ENCODE measurements at regions of chr10 and their contacts with region 1.

Region 1: DNA sequence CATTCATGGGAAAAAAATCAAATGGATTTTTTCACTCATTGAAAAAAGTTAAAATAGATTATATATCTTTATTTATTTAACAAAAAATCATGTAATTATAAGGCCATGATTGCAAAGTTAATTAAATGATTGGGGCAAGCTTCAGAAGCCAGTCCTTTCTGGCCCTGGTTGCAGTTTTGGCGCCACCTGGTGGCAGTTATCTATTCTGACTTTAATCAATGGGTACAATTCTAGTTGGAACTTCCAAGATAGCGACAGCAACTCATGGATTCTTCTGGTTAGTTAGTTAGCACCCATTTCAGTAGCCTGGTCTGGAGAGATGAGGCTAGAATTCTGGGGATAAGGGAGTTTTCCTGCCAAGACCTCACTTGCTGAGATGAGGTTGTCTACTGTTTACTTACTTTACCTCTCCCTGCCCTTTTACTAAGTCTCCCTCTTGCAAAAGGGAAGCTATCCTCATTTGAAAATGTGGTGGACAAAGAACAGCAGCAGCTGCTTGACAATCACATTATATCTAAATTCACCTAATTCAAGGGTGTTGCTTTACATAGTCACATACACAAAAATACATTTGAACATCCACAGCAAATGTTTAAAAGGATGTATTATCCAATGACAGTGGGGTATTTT is 42.3 kb downstream of the NOC3L start:
- DNase-seq: peak; percentile 33 to 61
- ATAC-seq: peak; percentile 63 to 77; a peak in 5 of 6 replicates
- H3K4me3 ChIP-seq: no peak overlapping the region
- H3K27ac ChIP-seq: no peak overlapping the region
- H3K4me1 ChIP-seq: no peaks in the 10 kb centered on the region
- CTCF ChIP-seq: peak; percentile 96
- EP300 ChIP-seq: no peak
- POLR2A ChIP-seq: no peak
- RAD21 ChIP-seq: peak; percentile 81 to 82

Region 2: GRCh38 chr10:94066411-94066810 is 254.0 kb before region 1 on chr10:
- CTCF ChIA-PET with region 1: interaction called, 10 read pairs
- POLR2A ChIA-PET with region 1: no interaction called
- DNase-seq: peak in 1 of 2 experiments; percentile 25
- ATAC-seq: peak; percentile 41 to 43; a peak in 2 of 6 replicates
- H3K4me3 ChIP-seq: no peak overlapping the region
- H3K27ac ChIP-seq: peak overlapping the region; percentile 56 to 78; a peak in 3 of 6 replicates
- H3K4me1 ChIP-seq: peaks cover 53% of the 10 kb centered on the region
- CTCF ChIP-seq: no peak
- EP300 ChIP-seq: no peak
- POLR2A ChIP-seq: no peak
- RAD21 ChIP-seq: no peak

Region 3: GRCh38 chr10:94287336-94287735 is 33.1 kb before region 1 on chr10:
- CTCF ChIA-PET with region 1: interaction called, 20 read pairs
- POLR2A ChIA-PET with region 1: no interaction called
- DNase-seq: no peak
- ATAC-seq: no peak
- H3K4me3 ChIP-seq: no peak overlapping the region
- H3K27ac ChIP-seq: no peak overlapping the region
- H3K4me1 ChIP-seq: no peaks in the 10 kb centered on the region
- CTCF ChIP-seq: no peak
- EP300 ChIP-seq: no peak
- POLR2A ChIP-seq: no peak
- RAD21 ChIP-seq: no peak

Region 4: DNA sequence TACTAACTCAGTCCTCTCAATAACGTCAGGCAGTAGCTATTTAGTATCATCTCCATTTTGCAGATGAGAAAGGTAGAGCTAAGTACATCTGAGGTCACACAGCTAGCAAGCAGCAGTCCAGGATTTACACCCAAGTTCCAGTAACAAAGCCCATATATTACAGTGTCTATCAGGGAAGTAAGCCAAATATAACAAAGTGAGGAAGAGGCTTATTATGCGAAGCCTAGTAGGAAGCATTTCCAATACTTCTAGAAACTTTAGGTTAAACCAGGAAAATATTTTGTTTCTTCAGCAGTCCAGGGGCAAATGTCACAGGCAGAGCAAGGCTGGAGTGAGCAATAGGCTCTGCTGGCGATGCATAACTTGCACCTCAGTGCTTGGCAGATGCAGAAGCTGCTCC is 11.5 kb before region 1 on chr10:
- CTCF ChIA-PET with region 1: interaction called, 68 read pairs
- POLR2A ChIA-PET with region 1: no interaction called
- DNase-seq: no peak
- ATAC-seq: no peak
- H3K4me3 ChIP-seq: no peak overlapping the region
- H3K27ac ChIP-seq: no peak overlapping the region
- H3K4me1 ChIP-seq: no peaks in the 10 kb centered on the region
- CTCF ChIP-seq: no peak
- EP300 ChIP-seq: no peak
- POLR2A ChIP-seq: no peak
- RAD21 ChIP-seq: no peak

Region 5: DNA sequence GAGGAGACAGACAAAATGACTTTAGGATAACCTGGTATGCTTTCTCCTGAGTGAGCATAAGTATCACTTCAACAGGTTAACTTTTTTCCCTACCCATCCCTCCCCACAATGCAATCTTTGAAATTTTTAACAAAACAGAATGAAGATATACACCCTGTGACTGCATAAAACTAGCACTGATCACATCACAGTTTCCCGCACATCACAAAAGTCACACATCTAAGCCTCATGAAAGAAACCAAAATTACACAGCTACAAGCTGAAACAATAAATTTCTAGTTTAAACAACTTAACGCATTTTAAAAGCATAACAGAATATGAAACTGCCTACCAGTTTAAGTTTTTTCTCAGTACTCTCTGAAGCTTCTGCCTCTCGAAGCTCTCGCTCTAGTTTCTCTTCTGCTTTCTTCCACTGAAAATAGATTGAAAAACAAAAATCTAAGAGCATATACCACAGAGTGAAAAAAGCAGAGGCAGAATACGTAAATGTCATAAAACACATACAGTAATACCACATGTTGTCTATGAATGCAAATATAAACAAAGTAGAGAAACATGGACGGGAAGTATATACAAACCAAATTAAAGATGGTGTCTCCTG is 24.2 kb after region 1 on chr10:
- CTCF ChIA-PET with region 1: interaction called, 20 read pairs
- POLR2A ChIA-PET with region 1: no interaction called
- DNase-seq: no peak
- ATAC-seq: no peak
- H3K4me3 ChIP-seq: no peak overlapping the region
- H3K27ac ChIP-seq: no peak overlapping the region
- H3K4me1 ChIP-seq: no peaks in the 10 kb centered on the region
- CTCF ChIP-seq: no peak
- EP300 ChIP-seq: no peak
- POLR2A ChIP-seq: no peak
- RAD21 ChIP-seq: no peak

Measured in A549 (cell line).